ENCODE measurements at regions of chr12 and their contacts with region 1.

Region 1: DNA sequence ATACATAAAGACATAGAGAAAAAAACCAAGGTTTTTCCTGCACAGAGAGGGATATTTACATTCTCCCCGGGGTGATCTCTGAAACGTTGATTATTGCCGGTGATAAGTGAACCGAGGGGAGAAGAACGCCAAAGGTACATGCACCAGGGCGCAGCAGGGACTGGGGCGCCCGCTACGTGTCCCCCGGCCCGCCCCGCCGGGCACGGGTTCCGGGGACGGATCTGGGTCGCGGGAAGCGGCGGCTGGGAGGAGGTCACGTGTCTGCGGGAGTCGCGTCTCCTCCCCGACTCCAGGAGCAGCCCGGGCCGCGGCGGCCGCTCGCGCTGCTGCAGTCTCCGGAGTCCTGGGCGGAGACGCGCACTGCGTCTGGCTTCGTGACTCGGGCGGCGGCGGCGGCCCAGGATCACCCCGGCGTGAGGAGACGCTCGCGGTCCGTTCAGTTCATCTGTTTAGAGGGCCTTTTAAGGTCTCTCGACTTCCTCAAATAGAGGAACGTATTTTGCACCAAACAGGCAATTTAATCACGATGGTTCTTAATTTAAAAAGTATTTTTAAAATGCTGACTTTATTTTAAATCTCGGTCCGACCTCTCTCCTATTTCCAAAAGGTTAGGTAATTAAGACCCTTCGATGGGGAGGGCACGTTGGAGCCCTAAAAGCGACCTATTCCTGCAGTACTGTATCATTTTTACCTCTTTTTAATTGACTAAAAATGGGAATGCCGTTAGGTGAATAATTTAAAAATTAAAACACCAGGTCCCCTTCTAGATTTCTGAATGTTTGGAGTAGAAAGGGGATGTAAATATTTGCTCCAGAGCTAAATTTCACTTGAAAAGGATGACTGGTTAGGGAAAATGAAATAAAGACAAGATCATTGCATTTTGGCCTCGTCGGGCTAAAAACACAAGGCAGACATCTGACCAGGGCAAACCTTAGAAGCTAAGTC is 1.8 kb upstream of the BHLHE41 start:
- DNase-seq: peak; percentile 76 to 98 (median 88)

Region 2: DNA sequence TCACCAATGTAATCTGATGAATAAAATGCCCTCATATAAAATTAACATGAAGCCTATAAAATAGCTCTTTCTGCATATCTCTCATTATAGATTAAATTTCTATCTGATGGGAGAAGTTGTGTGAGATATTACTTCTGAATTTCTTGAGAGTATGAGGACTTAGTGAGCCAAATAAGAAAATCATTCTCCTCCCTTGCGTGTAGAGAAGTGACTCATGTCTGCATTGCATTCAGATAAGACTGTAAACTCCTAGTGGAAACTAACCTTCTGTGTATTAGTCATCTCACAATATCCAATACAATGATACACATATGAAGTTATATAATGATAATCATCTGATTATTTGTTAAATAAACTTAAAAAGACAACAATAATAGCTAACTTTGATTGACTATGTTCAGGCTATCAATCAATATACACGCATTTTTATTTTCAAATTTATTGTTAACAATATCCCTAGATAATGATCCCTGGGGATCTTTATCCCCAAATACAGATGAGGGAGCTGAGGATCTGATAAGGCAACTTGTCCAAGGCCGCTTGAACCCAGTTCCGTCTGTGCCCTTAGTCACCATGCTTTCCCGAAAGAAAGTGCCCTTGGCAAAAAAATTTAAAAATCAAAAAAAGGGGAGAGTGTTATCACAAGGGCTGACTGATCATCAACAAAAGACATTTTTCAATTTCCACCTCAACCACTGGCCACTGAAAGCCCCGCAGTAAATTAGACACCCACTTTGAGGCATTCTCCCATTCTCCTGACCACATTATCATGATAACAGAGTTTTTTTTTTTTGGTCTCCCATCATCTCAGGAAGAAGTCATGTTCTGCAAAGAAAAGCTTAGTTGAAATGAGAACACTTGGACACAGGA is 357.3 kb before region 1 on chr12:
- intact Hi-C with region 1: no loop called
- DNase-seq: no peak

Region 3: GRCh38 chr12:26188127-26188526 is 61.5 kb after region 1 on chr12:
- intact Hi-C with region 1: loop called (anchors 5 kb)
- DNase-seq: no peak

Region 4: GRCh38 chr12:26226629-26227360 is 100.2 kb after region 1 on chr12:
- intact Hi-C with region 1: loop called (anchors 2 kb)
- DNase-seq: peak; percentile 39 to 89 (median 54)

Region 5: DNA sequence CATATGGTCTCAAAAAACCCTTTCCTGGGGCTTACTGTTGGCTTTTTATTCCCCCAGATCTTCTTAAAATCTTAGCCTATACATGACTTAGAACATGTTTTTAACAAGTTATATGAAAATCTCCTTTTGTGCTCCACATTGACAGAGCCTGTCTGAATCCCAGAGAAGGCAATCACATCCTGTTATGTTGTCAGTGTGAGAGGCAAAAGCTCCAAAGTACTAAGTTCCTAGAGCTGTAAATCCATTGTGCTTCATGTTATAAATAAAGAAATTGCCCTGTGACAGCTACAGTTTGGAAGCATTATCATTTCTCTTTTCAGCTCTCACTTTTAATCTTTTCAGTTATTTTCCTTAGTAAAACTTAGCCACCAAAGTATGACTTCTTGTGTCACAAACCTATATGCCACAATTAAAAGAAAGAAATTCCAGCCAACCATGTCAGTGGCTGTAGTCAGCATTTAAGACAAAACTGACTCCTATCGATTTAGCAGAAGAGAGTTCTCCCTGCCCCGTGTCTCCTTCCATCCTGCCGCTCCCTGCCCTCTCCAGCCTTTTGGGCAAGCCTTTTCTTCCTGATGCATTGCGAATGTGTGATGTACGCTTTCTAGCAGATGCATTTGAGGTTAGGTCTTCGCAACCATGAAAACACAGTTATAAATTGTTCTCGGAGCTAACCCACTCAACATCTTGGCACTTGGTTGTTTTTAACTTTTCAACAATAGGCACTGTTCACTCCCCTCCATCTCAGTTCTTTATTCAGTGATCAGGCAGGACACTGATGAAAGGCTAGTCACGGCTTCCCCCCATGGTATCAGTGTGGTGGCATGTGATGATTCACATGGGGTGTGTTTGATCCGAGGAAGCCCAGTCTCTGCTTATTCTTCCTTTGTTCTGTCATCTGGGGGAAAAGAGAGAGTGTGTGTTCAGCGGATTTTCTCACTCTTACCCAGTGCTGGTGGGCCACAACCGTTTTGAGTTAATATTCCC is 212.3 kb after region 1 on chr12:
- intact Hi-C with region 1: loop called (anchors 2 kb)
- DNase-seq: peak in 6 of 10 donors; percentile 57 to 93 (median 67)

Region 6: DNA sequence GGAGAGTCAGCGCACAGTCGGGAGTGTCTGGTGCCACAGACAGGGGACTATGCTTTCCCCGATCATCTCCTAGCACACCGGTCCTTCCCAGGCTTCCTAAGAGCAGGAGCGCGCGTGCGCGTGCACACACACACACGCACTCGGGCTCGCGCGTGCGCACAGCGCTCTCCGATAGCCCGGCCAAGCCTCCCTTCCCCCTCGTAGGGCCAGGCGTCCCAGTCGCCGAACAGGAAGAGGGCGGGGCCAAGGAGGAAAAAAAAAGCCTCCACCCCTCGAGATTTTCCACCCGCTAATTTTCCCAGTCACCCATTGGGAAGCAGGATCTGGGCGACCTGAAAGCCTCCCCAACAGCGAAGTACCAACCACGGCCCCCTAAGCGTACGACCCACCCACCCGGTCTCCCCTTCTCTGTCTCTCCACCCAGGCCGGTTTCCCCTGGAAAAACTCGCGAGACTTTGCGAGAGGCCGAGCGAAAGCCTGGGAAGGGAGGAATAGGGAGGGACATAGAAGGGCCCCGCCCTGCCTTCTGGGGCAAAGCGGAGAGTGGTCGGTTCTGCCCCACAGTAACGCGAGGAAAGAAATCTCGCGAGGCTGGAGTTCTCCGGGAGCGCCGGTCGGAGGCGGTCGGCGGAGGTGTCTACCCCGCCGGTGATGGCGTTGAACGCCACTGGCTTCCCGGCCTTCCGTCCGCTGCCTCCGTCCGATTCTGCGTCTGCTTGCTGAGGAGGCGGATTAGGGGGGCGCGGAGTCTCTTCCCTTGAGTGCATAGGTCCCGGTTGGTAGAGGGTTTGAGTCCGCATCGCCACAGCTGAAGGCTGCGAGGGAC is 811.5 kb after region 1 on chr12 and contains the starts of genes FGFR1OP2 and INTS13:
- intact Hi-C with region 1: loop called (anchors 5 kb)
- DNase-seq: peak; percentile 94 to 100 (median 96)

Measured in posterior cingulate gyrus (tissue), 11 donors.